Activated T-helper 1 cell treated with anti-CD3 and anti-CD28 coated beads, Interleukin-12 subunit alpha, Interleukin-12 subunit beta, Interleukin-2, Interleukin-4 antibody, amounts not matched to agents 30 ng/mL and 10 ng/mL and 1 ng/mL, durations not matched to agents 14 hours and 24 hours and 36 hours (primary cell): ENCODE measurements at regions of chr1 and their contacts with region 1.

Region 1: DNA sequence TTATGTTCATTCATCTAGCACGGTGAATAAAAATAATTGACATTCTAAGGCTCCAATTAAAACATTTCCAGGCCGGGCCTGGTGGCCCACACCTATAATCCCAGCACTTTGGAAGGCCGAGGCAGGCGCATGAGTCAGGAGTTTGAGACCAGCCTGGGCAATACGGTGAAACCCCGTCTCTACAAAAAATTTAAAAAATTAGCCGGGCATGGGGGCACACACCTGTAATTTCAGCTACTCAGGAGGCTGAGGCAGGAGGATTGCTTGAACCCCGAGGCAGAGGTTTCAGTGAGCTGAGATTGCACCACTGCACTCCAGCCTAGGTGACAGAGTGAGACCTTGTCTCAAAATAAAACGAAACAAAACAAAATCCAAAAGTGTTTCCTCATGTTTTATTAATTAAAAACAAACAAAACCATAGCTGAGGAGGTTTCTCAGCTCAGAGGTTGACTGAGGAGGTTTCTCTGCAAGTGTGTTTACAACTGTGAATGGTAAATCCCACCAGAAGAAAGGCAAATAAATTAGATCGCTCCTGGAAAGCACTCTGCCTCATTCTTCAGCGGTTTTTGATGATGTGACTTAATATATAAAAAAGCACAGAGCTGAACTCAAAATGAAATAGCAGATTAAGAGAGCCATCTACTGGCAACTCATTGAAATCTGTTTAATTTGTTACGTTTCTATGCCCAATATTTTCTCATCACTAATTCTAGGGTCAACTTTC is 37.7 kb upstream of the ATG4C start:
- DNase-seq: no peak
- H3K4me3 Mint-ChIP-seq: no peak overlapping the region
- H3K27ac Mint-ChIP-seq: no peak overlapping the region
- H3K4me1 Mint-ChIP-seq: no peaks in the 10 kb centered on the region
- H3K27me3 Mint-ChIP-seq: peaks cover 17% of the 10 kb centered on the region

Region 2: GRCh38 chr1:62082456-62083363 is 663.5 kb before region 1 on chr1:
- intact Hi-C with region 1: loop called (anchors 5 kb)
- DNase-seq: no peak
- H3K4me3 Mint-ChIP-seq: no peak overlapping the region
- H3K27ac Mint-ChIP-seq: no peak overlapping the region
- H3K4me1 Mint-ChIP-seq: no peaks in the 10 kb centered on the region
- H3K27me3 Mint-ChIP-seq: no peaks in the 10 kb centered on the region

Region 3: DNA sequence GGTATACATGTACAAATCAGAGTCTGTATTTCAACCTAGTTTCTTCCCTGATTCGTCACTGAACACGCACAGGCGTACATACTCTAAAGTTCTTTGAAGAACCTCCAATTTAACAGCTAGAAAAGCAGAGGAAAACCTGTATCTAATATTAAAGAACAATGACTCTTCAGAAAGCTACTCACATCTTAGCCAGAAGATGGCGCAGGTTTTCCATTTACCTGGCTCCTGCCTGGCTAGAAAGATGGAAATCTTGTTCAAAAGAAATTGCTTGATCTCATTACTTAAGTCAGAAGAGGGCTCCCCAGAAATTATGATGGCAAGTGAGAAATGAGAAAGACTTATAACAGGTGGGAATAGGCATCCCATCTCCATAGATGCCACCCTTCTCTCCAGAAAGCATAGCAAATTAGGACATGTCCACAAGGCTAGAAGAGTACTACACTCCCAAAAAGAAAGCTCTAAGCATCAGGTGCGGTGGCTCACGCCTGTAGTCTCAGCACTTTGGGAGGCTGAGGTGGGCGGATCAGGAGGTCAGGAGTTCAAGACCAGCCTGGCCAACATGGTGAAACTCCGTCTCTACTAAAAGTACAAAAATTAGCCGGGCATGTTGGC is 570.6 kb before region 1 on chr1:
- intact Hi-C with region 1: loop called (anchors 1 kb)
- DNase-seq: peak; percentile 3
- H3K4me3 Mint-ChIP-seq: no peak overlapping the region
- H3K27ac Mint-ChIP-seq: no peak overlapping the region
- H3K4me1 Mint-ChIP-seq: no peaks in the 10 kb centered on the region
- H3K27me3 Mint-ChIP-seq: peaks cover 3% of the 10 kb centered on the region

Region 4: GRCh38 chr1:62508187-62508758 is 238.0 kb before region 1 on chr1:
- intact Hi-C with region 1: loop called (anchors 1 kb)
- DNase-seq: no peak
- H3K4me3 Mint-ChIP-seq: no peak overlapping the region
- H3K27ac Mint-ChIP-seq: no peak overlapping the region
- H3K4me1 Mint-ChIP-seq: no peaks in the 10 kb centered on the region
- H3K27me3 Mint-ChIP-seq: no peaks in the 10 kb centered on the region